ENCODE measurements at regions of chr17 and their contacts with region 1.

Region 1: DNA sequence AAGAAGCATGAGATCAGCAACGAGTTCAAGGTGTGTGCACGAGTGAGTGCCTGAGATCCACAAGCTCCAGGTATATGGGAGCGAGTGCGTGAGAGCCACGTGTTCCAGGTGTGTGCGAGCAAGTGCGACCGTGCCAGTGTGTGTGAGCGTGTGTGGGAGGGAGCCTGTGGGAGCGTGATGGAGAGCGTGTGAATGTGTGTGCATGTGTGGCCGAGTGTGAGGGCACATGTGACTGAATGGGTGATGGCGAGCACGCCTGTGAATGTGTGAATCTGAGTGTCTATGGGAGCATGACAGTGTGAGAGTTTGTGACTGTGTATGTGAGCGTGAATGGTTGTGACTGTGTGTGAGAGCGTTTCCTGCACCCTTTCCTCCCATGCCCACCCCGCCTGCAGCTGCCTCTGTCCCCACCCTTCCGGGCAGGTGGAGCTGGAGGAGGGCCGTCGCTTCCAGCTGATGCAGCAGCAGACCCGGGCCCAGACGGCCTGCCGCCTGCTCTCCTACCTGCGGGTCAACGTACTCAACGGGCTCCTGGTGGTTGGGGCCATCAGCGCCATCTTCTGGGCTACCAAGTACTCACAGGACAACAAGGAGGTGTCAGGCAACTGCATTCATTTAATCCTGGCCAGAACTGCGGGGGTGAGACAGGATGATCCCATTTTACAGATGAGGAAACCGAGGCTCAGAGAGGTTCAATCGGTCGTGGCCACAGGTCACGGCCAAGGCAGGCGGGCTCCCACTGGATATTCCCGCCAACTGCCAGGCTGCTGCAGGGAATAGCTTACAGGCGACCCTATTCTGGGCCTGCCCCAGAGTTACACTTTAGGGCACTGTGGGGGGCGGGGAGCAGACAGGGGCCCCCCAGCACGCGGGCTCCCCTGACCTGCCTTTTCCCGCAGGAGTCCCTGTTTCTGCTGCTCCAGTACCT is 3.7 kb downstream of the TMC8 start:
- DNase-seq: peak; percentile 70
- H3K4me3 Mint-ChIP-seq: peak overlapping the region; percentile 86
- H3K27ac Mint-ChIP-seq: peak overlapping the region; percentile 85
- H3K4me1 Mint-ChIP-seq: peaks cover 69% of the 10 kb centered on the region
- H3K27me3 Mint-ChIP-seq: no peaks in the 10 kb centered on the region

Region 2: GRCh38 chr17:76726231-76726775 is 1407.9 kb before region 1 on chr17 and contains the start of gene JMJD6:
- intact Hi-C with region 1: loop called (anchors 5 kb)
- DNase-seq: peak; percentile 95
- H3K4me3 Mint-ChIP-seq: peak within 1 kb of the TSS; percentile 95
- H3K27ac Mint-ChIP-seq: peak within 1 kb of the TSS; percentile 96
- H3K4me1 Mint-ChIP-seq: peaks cover 42% of the 10 kb centered on the region
- H3K27me3 Mint-ChIP-seq: no peaks in the 10 kb centered on the region
- total RNA-seq, gene JMJD6: 80.5 TPM in 2 replicates

Region 3: DNA sequence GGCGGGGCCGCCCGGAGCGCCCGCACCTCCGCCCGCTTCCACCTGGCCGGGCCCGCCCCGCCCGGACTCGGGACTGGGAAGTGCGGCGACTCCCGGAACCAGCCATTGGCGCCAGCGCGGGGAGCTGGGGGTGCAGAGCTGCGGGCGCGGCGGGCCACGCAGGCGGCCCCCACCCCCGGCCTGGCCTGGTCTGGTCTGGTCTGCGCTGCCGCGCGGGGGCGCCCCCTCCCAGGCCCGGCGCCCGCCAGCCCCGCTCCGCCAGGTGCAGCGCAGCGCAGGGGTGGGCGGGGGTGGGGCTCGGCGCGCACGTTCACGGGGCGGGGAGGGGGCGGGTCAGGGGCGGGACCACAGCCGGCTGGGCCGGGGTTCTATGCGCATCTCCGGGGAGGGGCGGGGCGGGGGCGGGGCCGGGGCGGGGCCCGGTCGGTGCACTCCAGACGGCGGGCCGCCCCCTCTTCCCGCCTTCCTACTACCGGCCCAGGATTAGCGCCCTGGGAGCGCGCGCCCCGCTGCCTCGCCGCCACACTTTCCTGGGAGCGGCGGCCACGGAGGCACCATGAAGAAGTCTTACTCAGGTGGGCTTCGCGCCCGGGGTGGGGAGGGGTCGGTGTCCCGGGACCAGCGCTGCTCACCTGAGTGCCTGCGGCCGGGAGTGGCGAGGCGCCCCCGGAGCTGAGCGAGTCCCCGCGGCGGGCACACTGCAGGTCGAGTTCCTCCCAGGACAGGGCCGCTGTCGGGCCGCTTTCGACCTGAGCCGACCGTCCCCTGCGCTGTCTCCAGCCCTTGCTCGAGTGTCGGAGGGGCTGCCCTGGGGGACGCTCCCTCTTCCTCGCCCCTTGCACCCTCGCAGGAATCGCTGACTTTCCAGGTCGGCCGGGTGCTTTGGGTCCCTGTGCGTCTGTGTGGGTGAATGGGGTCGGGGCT is 853.0 kb before region 1 on chr17:
- intact Hi-C with region 1: no loop called
- DNase-seq: peak; percentile 56
- H3K4me3 Mint-ChIP-seq: peak overlapping the region; percentile 60
- H3K27ac Mint-ChIP-seq: peak overlapping the region; percentile 67
- H3K4me1 Mint-ChIP-seq: peaks cover 19% of the 10 kb centered on the region
- H3K27me3 Mint-ChIP-seq: peaks cover 32% of the 10 kb centered on the region

Region 4: DNA sequence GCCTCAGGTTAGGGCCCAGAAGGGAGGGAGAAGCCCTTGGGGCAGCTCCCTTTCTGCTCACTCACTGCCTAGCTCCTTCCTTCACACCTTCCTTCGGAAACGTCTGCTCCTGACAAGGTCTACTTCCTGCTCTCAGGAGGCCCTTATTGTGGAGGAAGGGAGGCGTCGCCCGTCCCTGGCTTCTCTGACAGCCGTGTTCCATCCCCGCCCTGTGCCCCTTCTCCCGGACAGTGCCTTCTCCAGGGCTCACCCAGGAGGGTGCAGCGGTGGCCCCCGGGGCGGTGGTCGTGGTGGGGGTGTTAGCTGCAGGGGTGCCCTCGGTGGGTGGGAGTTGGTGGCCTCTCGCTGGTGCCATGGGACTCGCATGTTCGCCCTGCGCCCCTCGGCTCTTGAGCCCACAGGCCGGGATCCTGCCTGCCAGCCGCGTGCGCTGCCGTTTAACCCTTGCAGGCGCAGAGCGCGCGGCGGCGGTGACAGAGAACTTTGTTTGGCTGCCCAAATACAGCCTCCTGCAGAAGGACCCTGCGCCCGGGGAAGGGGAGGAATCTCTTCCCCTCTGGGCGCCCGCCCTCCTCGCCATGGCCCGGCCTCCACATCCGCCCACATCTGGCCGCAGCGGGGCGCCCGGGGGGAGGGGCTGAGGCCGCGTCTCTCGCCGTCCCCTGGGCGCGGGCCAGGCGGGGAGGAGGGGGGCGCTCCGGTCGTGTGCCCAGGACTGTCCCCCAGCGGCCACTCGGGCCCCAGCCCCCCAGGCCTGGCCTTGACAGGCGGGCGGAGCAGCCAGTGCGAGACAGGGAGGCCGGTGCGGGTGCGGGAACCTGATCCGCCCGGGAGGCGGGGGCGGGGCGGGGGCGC is 761.6 kb before region 1 on chr17:
- intact Hi-C with region 1: no loop called
- DNase-seq: peak; percentile 76
- H3K4me3 Mint-ChIP-seq: peak overlapping the region; percentile 76
- H3K27ac Mint-ChIP-seq: peak overlapping the region; percentile 68
- H3K4me1 Mint-ChIP-seq: peaks cover 57% of the 10 kb centered on the region
- H3K27me3 Mint-ChIP-seq: no peaks in the 10 kb centered on the region

Region 5: DNA sequence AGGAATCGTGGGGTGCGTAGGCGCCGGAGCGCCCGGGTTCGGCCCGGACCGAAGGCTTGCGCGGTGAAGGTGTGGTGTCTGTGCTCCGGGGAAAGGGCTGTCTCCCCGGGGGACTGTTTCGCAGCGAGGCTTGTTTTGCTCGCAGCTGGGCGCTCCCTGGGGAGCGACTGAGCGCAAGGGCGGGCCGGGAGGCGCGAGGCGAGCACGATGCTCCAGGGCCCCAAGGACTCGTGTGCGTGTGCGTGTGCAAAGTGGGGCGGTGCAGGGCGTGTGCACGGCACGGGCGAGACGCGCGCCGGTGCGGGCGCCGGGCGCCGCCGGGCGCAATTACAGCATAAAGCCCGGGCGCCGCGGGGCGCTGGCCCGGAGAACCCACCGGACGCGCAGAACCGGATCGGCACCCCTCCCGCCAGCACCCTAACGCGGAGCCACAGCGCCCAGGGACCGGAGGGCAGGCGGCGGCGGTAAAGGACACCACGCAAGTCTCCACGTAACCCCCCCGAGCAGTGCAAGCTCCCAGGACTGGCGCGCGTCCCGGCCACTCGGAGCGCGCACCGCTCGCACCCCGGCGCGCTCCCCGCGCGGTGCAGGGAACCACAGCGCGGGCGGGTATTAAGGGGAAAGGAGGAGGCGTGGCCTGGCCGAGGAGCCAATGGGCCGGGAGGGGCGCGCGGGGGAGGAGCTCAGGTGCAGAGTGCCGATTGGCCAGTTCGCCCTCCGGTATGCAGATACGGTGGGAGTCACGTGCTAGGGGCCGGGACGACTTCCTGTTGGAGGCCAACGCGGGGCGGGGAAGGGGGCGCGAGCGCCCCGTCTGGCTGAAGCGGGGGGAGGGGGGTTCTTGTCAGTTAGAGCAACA is 176.1 kb before region 1 on chr17 and contains the start of gene TNRC6C:
- intact Hi-C with region 1: loop called (anchors 5 kb)
- DNase-seq: peak; percentile 99
- H3K4me3 Mint-ChIP-seq: peak within 1 kb of the TSS; percentile 95
- H3K27ac Mint-ChIP-seq: peak within 1 kb of the TSS; percentile 89
- H3K4me1 Mint-ChIP-seq: peaks cover 44% of the 10 kb centered on the region
- H3K27me3 Mint-ChIP-seq: peaks cover 42% of the 10 kb centered on the region
- total RNA-seq, gene TNRC6C: 15.5 and 19.6 TPM in 2 replicates

Region 6: DNA sequence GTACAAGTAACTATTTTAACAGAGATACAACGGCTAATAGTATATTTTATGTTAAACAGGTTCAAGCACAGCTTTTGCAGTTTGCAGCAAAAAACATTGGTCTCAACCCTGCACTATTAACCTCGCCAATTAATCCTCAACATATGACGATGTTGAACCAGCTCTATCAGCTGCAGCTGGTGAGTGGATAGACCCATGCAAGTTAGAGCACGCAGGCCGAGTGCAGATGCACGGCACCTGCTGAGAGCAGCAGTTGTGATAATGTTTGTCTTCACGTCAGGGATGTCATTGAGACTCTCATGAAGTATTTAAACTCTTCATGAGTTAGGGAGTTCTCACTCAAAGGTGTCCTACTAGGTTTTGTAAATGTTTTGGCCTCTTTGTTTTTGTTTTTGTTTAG is 51.2 kb before region 1 on chr17:
- intact Hi-C with region 1: loop called (anchors 1 kb)
- DNase-seq: no peak
- H3K4me3 Mint-ChIP-seq: no peak overlapping the region
- H3K27ac Mint-ChIP-seq: no peak overlapping the region
- H3K4me1 Mint-ChIP-seq: peaks cover 5% of the 10 kb centered on the region
- H3K27me3 Mint-ChIP-seq: no peaks in the 10 kb centered on the region

Region 7: DNA sequence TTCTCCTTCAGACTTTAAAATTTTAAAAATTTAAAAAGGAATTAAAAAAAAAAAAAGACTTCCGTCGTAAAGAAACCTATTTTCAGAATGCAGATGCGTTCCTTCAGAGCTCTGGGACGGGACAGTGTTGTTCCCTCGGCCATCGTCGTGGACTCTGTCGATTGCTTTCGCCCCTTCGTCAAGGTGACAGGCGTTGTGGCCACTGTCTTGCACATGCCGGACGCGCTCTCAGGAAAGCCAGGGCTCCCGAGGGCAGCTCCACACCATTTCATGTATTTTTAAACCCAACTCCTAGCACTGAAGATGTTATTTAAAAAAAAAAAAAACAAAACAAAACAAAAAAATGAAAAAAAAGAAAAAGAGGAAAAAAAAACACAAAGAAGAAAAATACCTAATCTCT is 28.0 kb before region 1 on chr17:
- intact Hi-C with region 1: no loop called
- DNase-seq: no peak
- H3K4me3 Mint-ChIP-seq: no peak overlapping the region
- H3K27ac Mint-ChIP-seq: no peak overlapping the region
- H3K4me1 Mint-ChIP-seq: peaks cover 9% of the 10 kb centered on the region
- H3K27me3 Mint-ChIP-seq: no peaks in the 10 kb centered on the region

Region 8: DNA sequence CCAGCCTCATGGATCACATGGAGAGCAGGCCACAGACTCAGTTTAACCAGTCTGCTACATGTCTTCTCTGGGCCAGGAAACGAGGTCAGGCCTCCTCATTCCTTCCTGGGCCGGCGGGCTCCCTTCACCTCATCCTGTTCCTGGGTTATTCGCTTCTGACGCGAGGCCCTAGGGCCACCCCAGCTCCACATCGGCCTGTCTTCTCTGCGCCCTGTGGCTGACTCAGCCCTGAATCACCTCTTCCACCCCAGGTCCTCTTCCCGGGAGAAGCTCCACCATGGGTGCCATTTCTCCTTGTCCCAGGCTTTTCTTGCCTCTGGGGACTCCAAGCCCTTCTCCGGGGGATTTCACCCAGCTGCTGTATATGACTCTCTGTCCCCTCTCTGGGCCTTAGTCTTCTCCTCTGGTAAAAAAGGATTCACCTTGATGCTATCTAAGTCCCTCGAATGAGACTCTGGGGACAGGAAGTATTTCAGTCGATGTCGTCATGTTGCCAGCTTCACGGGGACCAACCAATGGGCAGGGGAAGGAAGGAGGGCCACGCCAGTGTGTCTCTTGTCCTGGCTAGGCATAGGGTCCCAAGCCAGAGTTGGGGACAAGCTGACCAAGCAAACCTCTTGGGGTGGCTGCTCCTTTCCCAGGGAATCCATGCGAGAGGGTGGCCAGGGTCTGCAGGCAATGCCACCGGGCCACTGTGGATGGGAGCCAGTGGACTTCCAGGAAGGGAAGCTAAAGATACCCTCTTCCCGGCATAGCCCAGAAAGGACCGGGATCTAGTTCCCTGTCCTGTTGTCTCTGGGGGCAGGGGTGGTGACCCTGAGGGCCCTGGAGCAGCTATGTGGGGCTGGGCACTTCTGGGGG is 167.0 kb after region 1 on chr17:
- intact Hi-C with region 1: no loop called
- DNase-seq: no peak
- H3K4me3 Mint-ChIP-seq: no peak overlapping the region
- H3K27ac Mint-ChIP-seq: peak overlapping the region; percentile 21
- H3K4me1 Mint-ChIP-seq: peaks cover 15% of the 10 kb centered on the region
- H3K27me3 Mint-ChIP-seq: no peaks in the 10 kb centered on the region

Region 9: GRCh38 chr17:78360371-78361224 is 226.4 kb after region 1 on chr17:
- intact Hi-C with region 1: loop called (anchors 5 kb)
- DNase-seq: peak; percentile 87
- H3K4me3 Mint-ChIP-seq: peak overlapping the region; percentile 79
- H3K27ac Mint-ChIP-seq: peak overlapping the region; percentile 85
- H3K4me1 Mint-ChIP-seq: peaks cover 48% of the 10 kb centered on the region
- H3K27me3 Mint-ChIP-seq: no peaks in the 10 kb centered on the region

Measured in activated T-helper 1 cell treated with anti-CD3 and anti-CD28 coated beads, Interleukin-12 subunit alpha, Interleukin-12 subunit beta, Interleukin-2, Interleukin-4 antibody, amounts not matched to agents 30 ng/mL and 10 ng/mL and 1 ng/mL, durations not matched to agents 14 hours and 24 hours and 36 hours (primary cell).